ENCODE measurements at regions of chr1 and their contacts with region 1.

Region 1: GRCh38 chr1:207644852-207645634 is at the start of gene CR1L:
- DNase-seq: peak; percentile 69 to 77
- ATAC-seq: peak; percentile 92 to 98 (median 97)
- H3K4me3 ChIP-seq: peak within 1 kb of the TSS; percentile 19 to 74 (median 62)
- H3K27ac ChIP-seq: no peak within 1 kb of the TSS
- H3K4me1 ChIP-seq: peaks cover 0 to 18% (median 9%) of the 10 kb centered on the region in 9 donors
- H3K27me3 ChIP-seq: peaks cover 0 to 46% (median 12%) of the 10 kb centered on the region in 7 donors
- CTCF ChIP-seq: no peak
- total RNA-seq, gene CR1L: 0.34 to 1.1 (median 0.42) TPM in 3 of 10 donors, not detected in the others

Region 2: GRCh38 chr1:207698822-207699483 is 53.9 kb after region 1 on chr1:
- intact Hi-C with region 1: loop called in 1 of 10 experiments (anchors 10 kb)
- DNase-seq: peak; percentile 24 to 31
- ATAC-seq: peak in 7 of 8 donors; percentile 44 to 79 (median 55)
- H3K4me3 ChIP-seq: no peak overlapping the region
- H3K27ac ChIP-seq: no peak overlapping the region
- H3K4me1 ChIP-seq: no peaks in the 10 kb centered on the region
- H3K27me3 ChIP-seq: peaks cover 0 to 15% (median 0%) of the 10 kb centered on the region in 7 donors
- CTCF ChIP-seq: peak; percentile 35 to 81 (median 64)